ENCODE measurements at regions of chr17 and their contacts with region 1.

Region 1: DNA sequence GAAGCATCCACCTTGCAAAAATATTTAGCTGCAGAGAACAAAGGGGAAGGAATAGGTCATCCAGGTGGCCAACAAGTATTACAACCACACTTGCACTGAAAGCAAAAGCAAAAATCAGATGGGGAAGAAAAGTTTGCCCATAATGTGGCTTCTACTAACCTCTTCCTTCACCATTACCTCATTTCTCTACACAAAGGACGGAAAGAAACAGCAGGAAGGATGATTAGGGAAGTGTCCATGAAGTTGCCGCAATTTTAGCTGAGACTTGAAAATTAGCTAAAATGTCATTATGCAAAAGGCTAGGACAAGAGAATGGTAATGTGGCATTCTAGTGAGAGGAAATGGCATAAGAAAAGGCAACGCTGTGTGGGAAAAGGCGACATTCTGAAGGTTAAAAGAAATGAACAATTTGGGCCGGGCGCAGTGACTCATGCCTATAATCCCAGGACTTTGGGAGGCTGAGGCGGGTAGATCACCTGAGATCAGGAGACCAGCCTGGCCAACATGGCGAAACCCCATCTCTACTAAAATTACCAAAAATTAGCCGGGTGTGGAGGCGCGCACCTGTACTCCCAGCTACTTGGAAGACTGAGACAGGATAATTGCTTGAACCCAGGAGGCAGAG is 13.7 kb downstream of the KANSL1 start:
- DNase-seq: no peak
- ATAC-seq: peak; percentile 53
- H3K4me3 Mint-ChIP-seq: peak overlapping the region; percentile 61
- H3K27ac Mint-ChIP-seq: peak overlapping the region; percentile 66
- H3K4me1 Mint-ChIP-seq: peaks cover 87% of the 10 kb centered on the region
- H3K27me3 Mint-ChIP-seq: no peaks in the 10 kb centered on the region
- CTCF ChIP-seq: no peak

Region 2: DNA sequence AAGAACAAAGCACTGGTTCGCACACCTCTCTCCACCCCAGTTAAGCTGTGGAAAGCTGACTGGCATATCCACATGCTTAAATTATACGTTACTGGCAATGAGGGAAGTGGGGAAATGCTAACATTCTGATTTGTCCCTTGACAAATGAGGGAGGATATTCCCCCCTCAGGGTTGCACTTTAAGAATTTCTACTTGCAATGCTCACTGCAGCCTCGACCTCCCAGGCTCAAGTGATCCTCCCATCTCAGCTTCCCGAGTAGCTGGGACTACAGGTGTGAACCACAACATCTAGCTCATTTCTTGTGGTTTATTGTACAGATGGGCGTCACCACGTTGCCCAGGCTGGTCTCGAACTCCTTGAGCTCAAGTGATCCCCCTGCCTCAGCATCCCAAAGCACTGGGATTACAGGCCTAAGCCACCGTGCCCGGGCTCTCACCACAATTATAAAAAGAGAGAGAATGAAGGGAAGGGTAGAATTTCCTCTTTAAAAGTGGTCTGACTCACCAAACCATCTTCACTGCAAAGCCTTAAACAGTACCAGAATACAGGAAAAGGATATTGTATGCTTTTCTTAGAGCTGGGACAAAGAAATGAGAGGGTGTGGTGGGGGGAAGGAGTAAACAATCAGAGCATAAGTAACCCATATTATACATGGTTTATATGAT is 25.2 kb before region 1 on chr17:
- CTCF ChIA-PET with region 1: no interaction called
- POLR2A ChIA-PET with region 1: no interaction called
- intact Hi-C with region 1: loop called (anchors 2 kb)
- DNase-seq: no peak
- ATAC-seq: no peak
- H3K4me3 Mint-ChIP-seq: peak overlapping the region; percentile 16
- H3K27ac Mint-ChIP-seq: peak overlapping the region; percentile 43
- H3K4me1 Mint-ChIP-seq: peaks cover 88% of the 10 kb centered on the region
- H3K27me3 Mint-ChIP-seq: no peaks in the 10 kb centered on the region
- CTCF ChIP-seq: no peak

Measured in activated B cell treated with CpG ODN at 0.5 μM for 24 hours (primary cell).